Right ventricle myocardium inferior (tissue), 1 donor: ENCODE measurements at regions of chr10 and their contacts with region 1.

Region 1: GRCh38 chr10:74589226-74589673 is 237.2 kb upstream of the KAT6B start:
- DNase-seq: peak; percentile 88
- ATAC-seq: peak; percentile 93

Region 2: GRCh38 chr10:74293686-74294371 is 295.4 kb before region 1 on chr10:
- intact Hi-C with region 1: loop called (anchors 5 kb)
- DNase-seq: no peak
- ATAC-seq: no peak

Region 3: DNA sequence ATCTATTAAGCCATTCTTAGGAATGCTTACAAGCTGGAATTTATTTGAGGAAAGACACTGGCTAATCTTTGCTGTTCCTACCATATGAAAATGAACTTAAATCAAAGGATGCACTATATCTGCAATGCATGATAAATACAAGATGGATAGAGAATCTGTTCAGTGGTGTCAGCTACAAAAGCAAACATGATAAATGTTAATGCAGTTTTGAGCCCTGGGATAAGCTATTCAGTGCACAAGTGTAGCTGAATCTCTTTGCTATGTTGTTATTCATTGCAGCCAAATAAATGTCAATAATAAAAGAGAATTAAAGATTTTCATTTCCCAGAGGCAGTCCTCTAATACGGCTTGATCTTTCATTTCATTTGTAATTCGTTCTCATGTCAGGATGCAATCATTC is 13.3 kb after region 1 on chr10:
- intact Hi-C with region 1: no loop called
- DNase-seq: no peak
- ATAC-seq: no peak

Region 4: GRCh38 chr10:74677951-74678350 is 88.7 kb after region 1 on chr10:
- intact Hi-C with region 1: no loop called
- DNase-seq: no peak
- ATAC-seq: no peak

Region 5: DNA sequence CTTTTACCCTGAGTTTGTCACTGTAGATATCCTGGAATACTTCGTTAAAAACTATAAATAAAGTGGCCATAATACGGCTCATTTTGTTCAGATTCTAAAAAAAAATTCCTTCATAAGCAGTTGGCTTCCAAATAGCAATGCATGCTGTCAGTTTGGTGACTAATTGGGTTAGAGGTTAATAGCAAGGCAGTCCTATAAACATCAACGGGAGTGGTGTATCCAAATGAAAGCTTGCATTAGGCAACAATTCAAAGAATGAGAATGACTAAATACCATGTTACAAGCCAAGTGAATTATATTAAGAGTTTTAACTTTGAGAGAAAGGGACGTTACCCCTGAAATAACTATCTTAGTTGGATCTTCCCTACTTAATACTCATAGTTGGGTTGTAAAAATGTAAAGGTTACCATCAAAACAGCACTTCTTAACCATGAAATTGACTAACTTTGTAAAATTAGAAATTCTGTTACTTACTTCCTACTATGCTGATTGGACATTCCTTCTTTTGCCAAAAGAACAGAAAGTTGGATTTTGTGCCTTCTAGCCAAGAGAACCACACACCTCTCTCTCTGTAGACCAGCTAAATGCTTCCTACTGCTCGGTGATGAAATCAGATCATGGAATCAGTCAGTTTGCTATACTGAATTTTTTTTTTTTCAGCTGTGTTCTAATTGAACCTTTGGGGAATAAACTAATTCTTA is 335.2 kb after region 1 on chr10:
- intact Hi-C with region 1: loop called (anchors 5 kb)
- DNase-seq: no peak
- ATAC-seq: peak; percentile 66

Region 6: GRCh38 chr10:75019370-75019769 is 430.1 kb after region 1 on chr10:
- intact Hi-C with region 1: loop called (anchors 10 kb)
- DNase-seq: no peak
- ATAC-seq: no peak